ENCODE measurements at regions of chr1 and their contacts with region 1.

Region 1: DNA sequence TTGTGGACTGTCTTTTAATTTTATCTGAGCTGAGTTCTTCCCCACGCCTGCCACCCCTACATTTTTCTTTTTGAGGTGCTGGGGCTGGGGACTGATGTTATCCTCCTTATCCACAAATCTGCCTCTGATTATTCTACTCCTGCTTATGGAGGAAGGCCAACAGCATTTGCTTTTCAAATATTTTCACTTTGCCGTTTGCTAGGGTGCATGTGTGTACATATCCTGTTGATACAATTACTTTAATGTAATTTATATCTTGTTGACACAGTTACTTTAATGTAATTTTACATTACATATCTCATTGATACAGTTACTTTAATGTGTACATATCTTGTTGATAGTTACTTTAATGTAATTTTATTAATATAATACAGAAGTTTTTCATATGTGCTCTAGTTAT is 36.2 kb downstream of the PRRC2C start:
- DNase-seq: no peak
- H3K4me3 ChIP-seq: no peak overlapping the region
- CTCF ChIP-seq: no peak
- POLR2A ChIP-seq: no peak

Region 2: DNA sequence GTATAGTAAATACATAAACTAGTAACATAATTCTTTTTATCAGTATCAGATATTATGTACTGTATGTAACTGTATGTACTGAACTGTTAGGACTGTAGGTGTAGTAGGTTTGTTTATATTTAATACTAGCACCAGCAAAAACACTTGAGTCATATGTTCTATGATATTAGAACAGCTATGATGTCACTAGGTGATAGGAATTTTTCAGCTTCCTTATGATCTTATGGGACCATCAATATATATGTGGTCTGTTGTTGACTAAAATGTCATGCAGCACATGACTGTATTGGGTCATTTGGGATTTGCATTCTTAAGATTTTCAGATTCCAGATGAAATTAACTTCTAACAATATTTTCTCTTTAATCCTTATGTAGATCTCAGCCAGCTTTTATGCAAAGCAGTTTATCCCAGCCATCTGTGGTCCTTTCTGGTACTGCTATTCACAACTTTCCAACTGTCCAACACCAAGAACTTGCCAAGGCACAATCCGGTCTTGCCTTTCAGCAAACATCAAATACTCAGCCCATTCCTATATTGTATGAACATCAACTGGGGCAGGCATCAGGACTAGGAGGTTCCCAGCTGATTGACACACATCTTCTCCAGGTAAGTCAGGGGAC is 62.1 kb after region 1 on chr1:
- intact Hi-C with region 1: loop called (anchors 10 kb)
- DNase-seq: no peak
- H3K4me3 ChIP-seq: no peak overlapping the region
- CTCF ChIP-seq: no peak
- POLR2A ChIP-seq: no peak

Measured in lower leg skin (tissue), 4 donors.